ENCODE measurements at regions of chr1 and their contacts with region 1.

Region 1: DNA sequence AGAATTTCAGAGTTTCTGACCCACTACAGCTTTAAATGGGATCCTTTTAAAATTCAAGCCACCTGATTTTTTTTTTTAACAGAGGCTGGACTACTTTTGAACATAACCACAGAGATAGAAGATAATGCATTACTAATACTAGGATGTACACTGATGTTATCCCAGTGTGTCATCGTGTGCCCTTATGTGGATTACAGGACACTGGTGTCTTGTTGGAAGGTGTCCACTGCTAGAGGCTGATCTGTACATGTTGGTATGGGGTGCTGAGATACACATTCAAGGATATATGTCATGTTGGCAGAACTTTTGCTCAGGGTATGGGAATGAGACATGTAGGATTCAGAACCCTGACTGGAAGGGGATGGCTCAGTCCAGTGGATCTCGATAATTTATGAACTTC is 56.3 kb downstream of the INAVA start:
- DNase-seq: no peak
- H3K27ac ChIP-seq: no peak overlapping the region
- CTCF ChIP-seq: no peak

Region 2: GRCh38 chr1:200938955-200939354 is 12.1 kb before region 1 on chr1:
- CTCF ChIA-PET with region 1: interaction called, 3 read pairs
- POLR2A ChIA-PET with region 1: interaction called, 11 read pairs
- DNase-seq: no peak
- H3K27ac ChIP-seq: no peak overlapping the region
- CTCF ChIP-seq: no peak

Region 3: GRCh38 chr1:200962596-200962995 is 11.6 kb after region 1 on chr1:
- CTCF ChIA-PET with region 1: no interaction called
- POLR2A ChIA-PET with region 1: no interaction called
- DNase-seq: no peak
- H3K27ac ChIP-seq: no peak overlapping the region
- CTCF ChIP-seq: no peak

Measured in RWPE1 (cell line).